ENCODE measurements at regions of chr6 and their contacts with region 1.

Region 1: GRCh38 chr6:119742188-119742803 is 392.7 kb upstream of the MAN1A1 start:
- DNase-seq: peak; percentile 70
- H3K4me3 Mint-ChIP-seq: no peak overlapping the region
- H3K27ac Mint-ChIP-seq: no peak overlapping the region
- H3K4me1 Mint-ChIP-seq: no peaks in the 10 kb centered on the region
- H3K27me3 Mint-ChIP-seq: no peaks in the 10 kb centered on the region
- CTCF ChIP-seq: peak; percentile 81

Region 2: GRCh38 chr6:119349323-119350042 is 392.8 kb before region 1 on chr6 and contains the start of gene MAN1A1:
- CTCF ChIA-PET with region 1: no interaction called
- intact Hi-C with region 1: loop called (anchors 5 kb)
- DNase-seq: peak; percentile 85
- H3K4me3 Mint-ChIP-seq: peak within 1 kb of the TSS; percentile 77
- H3K27ac Mint-ChIP-seq: peak within 1 kb of the TSS; percentile 49
- H3K4me1 Mint-ChIP-seq: peaks cover 24% of the 10 kb centered on the region
- H3K27me3 Mint-ChIP-seq: no peaks in the 10 kb centered on the region
- CTCF ChIP-seq: no peak
- total RNA-seq, gene MAN1A1: 13.3 and 13.7 TPM in 2 replicates

Region 3: DNA sequence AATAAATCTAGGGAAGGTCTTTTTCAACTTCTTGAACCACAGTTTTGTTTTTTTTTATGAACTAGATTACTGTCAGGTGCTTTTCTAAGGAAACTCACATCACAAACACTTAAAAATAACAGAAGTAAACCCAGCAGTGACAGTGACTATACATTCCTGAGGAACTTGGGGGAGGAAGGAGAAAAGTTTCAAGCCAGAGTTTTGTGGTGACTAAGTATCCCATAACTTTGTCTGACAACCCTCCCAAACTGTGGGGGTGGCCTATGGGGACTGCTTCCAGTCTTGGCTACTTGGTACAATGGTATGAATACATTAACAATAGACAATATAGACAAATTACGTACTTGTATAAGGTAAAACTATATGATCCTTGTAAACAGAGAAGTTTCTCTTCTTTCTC is 190.3 kb before region 1 on chr6:
- CTCF ChIA-PET with region 1: no interaction called
- intact Hi-C with region 1: no loop called
- DNase-seq: no peak
- H3K4me3 Mint-ChIP-seq: no peak overlapping the region
- H3K27ac Mint-ChIP-seq: no peak overlapping the region
- H3K4me1 Mint-ChIP-seq: no peaks in the 10 kb centered on the region
- H3K27me3 Mint-ChIP-seq: no peaks in the 10 kb centered on the region
- CTCF ChIP-seq: no peak

Region 4: DNA sequence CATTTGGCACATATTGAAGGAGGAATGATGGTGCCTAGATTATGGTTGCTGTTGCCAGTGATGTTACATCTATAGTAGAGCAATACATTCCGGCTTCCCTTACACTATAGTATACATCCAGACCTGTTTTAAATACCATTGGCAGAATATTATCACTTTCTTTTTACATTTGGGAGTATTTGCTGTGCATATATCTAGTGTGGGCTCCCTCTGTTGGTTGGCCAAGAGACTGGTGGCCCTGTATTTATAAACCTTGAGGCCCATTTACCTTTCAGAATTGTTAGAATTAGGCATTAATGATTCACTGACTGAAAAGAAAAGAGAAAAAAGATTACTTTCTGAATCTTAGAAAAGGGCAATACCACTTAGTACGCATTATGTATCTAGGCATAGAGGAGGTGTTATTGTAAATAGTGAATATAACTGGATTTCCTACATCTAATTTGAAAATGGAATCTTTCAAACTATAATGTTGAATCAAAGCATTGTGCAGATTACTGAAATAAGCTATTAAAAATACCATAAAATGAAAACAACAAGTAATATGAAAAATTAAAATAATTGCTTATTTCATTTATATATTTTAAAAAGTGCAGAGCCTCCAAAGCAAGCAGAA is 236.1 kb after region 1 on chr6:
- CTCF ChIA-PET with region 1: no interaction called
- intact Hi-C with region 1: loop called (anchors 2 kb)
- DNase-seq: peak; percentile 29
- H3K4me3 Mint-ChIP-seq: no peak overlapping the region
- H3K27ac Mint-ChIP-seq: no peak overlapping the region
- H3K4me1 Mint-ChIP-seq: no peaks in the 10 kb centered on the region
- H3K27me3 Mint-ChIP-seq: no peaks in the 10 kb centered on the region
- CTCF ChIP-seq: peak; percentile 13

Region 5: GRCh38 chr6:120077489-120077888 is 335.2 kb after region 1 on chr6:
- CTCF ChIA-PET with region 1: no interaction called
- intact Hi-C with region 1: loop called (anchors 5 kb)
- DNase-seq: peak; percentile 2
- H3K4me3 Mint-ChIP-seq: no peak overlapping the region
- H3K27ac Mint-ChIP-seq: no peak overlapping the region
- H3K4me1 Mint-ChIP-seq: no peaks in the 10 kb centered on the region
- H3K27me3 Mint-ChIP-seq: no peaks in the 10 kb centered on the region
- CTCF ChIP-seq: no peak

Region 6: DNA sequence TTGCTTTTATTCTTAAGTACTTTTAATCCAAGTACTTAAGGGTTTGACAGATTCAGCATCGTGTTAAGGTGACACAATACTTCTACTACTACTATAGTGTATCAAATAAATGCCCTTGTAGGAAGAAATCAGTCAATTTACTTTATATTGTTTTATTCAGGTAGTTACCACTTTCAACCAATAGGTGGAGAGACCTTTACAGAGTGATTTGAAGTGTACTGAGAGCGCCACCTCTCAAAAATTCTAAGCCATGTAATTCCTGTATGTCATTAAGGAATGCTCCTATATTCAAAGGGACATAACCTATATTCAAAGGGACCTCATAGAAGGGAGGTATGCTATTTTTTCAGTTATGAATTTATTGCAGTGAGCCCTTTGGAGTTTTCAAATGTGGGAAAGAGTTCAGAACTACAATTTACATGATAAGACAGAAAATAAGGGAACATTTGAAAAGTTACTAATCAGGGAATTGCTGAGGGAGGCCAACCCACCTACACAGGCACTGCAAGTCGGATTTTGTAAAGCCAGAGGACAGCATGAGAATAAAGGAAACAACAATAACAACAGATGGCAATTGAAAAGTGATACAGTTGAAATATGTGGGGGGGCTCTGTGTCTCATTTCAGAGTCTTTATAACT is 636.4 kb after region 1 on chr6:
- CTCF ChIA-PET with region 1: no interaction called
- intact Hi-C with region 1: loop called (anchors 5 kb)
- DNase-seq: no peak
- H3K4me3 Mint-ChIP-seq: no peak overlapping the region
- H3K27ac Mint-ChIP-seq: no peak overlapping the region
- H3K4me1 Mint-ChIP-seq: peaks cover 5% of the 10 kb centered on the region
- H3K27me3 Mint-ChIP-seq: no peaks in the 10 kb centered on the region
- CTCF ChIP-seq: peak; percentile 55

Region 7: GRCh38 chr6:120826253-120826652 is 1084.0 kb after region 1 on chr6:
- CTCF ChIA-PET with region 1: no interaction called
- intact Hi-C with region 1: loop called (anchors 1 kb)
- DNase-seq: peak; percentile 73
- H3K4me3 Mint-ChIP-seq: no peak overlapping the region
- H3K27ac Mint-ChIP-seq: no peak overlapping the region
- H3K4me1 Mint-ChIP-seq: no peaks in the 10 kb centered on the region
- H3K27me3 Mint-ChIP-seq: no peaks in the 10 kb centered on the region
- CTCF ChIP-seq: peak; percentile 59

Measured in Calu3 (cell line).